AG04450 (cell line): ENCODE measurements at regions of chr6 and their contacts with region 1.

Region 1: DNA sequence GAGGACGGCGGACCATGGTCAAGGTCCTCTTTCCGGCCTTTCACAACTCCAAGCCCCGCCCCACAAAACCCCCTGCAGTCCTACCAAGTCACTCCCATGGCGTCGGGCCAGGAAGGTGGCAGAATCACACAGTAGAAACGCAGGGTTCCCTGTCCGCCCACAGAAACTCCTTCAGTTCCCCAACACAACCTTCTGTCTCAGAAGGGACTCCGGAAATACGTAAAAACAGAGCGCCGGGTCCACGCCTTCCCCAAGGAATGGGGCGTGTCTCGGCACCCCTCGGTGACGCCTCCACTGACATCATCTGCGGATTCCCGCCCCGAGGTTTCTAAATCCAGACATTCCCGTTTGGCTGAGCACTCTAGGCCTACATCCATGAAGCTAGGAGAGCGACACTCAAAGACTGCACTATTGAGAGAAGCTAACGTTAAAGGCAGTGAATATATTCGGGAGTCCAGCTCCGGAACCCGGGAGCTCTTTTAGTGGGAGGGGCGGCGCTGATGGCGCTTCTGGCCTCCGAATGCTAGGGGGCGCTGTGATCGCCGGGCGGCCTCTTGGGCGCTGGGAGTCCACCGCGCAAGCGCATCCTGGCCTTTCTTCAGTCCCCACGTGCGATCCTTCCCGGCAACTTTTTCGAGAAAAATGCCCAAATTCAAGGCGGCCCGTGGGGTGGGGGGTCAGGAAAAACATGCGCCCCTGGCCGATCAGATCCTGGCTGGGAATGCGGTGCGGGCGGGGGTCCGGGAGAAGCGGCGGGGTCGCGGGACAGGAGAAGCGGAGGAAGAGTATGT is at the starts of genes BYSL and MED20:
- DNase-seq: peak; percentile 79
- H3K4me3 ChIP-seq: peak within 1 kb of the TSS; percentile 74
- H3K27ac ChIP-seq: peak within 1 kb of the TSS; percentile 95
- H3K27me3 ChIP-seq: no peaks in the 10 kb centered on the region
- CTCF ChIP-seq: peak; percentile 95
- polyA plus RNA-seq, gene BYSL: 18.1 and 25.1 TPM in 2 replicates
- polyA plus RNA-seq, gene MED20: 45.0 and 48.6 TPM in 2 replicates

Region 2: GRCh38 chr6:41636833-41637193 is 284.3 kb before region 1 on chr6:
- CTCF ChIA-PET with region 1: no interaction called
- POLR2A ChIA-PET with region 1: no interaction called
- DNase-seq: no peak
- H3K4me3 ChIP-seq: no peak overlapping the region
- H3K27ac ChIP-seq: no peak overlapping the region
- H3K27me3 ChIP-seq: peaks cover 82% of the 10 kb centered on the region
- CTCF ChIP-seq: no peak

Region 3: GRCh38 chr6:41757931-41758563 is 163.1 kb before region 1 on chr6:
- CTCF ChIA-PET with region 1: no interaction called
- POLR2A ChIA-PET with region 1: no interaction called
- DNase-seq: no peak
- H3K4me3 ChIP-seq: no peak overlapping the region
- H3K27ac ChIP-seq: no peak overlapping the region
- H3K27me3 ChIP-seq: peaks cover 24% of the 10 kb centered on the region
- CTCF ChIP-seq: no peak

Region 4: GRCh38 chr6:41801380-41801779 is 119.7 kb before region 1 on chr6:
- CTCF ChIA-PET with region 1: interaction called, 15 read pairs
- POLR2A ChIA-PET with region 1: no interaction called
- DNase-seq: no peak
- H3K4me3 ChIP-seq: no peak overlapping the region
- H3K27ac ChIP-seq: no peak overlapping the region
- H3K27me3 ChIP-seq: no peaks in the 10 kb centered on the region
- CTCF ChIP-seq: peak; percentile 81

Region 5: GRCh38 chr6:41895300-41896233 is 25.5 kb before region 1 on chr6 and contains the start of gene USP49:
- CTCF ChIA-PET with region 1: interaction called, 34 read pairs
- POLR2A ChIA-PET with region 1: interaction called, 10 read pairs
- DNase-seq: peak; percentile 56
- H3K4me3 ChIP-seq: peak within 1 kb of the TSS; percentile 80
- H3K27ac ChIP-seq: peak within 1 kb of the TSS; percentile 92
- H3K27me3 ChIP-seq: no peaks in the 10 kb centered on the region
- CTCF ChIP-seq: no peak
- polyA plus RNA-seq, gene USP49: 2.9 and 3.0 TPM in 2 replicates

Region 6: DNA sequence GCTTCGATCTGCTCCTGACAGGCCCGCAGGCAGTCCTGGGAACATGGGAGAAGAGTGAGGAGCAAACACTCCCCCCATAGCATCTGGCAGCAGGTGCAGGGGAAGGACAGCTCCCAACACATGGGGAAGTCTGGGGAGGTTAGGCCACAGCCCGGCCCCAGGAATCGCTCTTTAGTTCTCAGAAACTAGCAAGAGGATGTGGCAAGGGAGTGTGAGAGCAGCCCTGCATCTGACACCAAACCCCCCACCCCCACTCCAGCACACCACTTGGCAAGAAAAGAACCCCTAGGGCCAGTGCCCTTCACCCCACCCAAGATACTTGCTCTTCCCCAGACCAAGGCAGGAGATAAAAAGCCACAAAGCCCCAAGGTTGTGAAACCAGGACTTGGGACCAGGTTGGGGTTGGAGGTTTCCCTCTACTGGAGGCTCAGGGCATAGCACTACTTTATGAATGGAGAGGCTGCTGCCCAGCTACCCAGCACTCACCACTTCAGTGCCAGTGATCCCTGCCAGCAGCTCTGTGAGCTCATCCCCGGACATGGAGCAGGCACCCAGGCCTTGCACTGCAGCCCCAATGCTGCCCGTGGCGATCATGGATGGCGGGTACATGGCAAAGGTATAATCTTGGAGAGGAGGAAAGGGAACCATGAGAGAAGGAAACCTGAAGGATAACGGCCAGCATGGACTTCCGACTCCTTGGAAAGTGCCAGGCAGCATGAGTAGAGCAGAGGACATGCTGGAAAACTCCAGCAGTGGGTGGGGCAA is 15.1 kb after region 1 on chr6:
- CTCF ChIA-PET with region 1: interaction called, 144 read pairs
- POLR2A ChIA-PET with region 1: interaction called, 6 read pairs
- DNase-seq: peak; percentile 65
- H3K4me3 ChIP-seq: no peak overlapping the region
- H3K27ac ChIP-seq: peak overlapping the region; percentile 47
- H3K27me3 ChIP-seq: no peaks in the 10 kb centered on the region
- CTCF ChIP-seq: peak; percentile 94

Region 7: DNA sequence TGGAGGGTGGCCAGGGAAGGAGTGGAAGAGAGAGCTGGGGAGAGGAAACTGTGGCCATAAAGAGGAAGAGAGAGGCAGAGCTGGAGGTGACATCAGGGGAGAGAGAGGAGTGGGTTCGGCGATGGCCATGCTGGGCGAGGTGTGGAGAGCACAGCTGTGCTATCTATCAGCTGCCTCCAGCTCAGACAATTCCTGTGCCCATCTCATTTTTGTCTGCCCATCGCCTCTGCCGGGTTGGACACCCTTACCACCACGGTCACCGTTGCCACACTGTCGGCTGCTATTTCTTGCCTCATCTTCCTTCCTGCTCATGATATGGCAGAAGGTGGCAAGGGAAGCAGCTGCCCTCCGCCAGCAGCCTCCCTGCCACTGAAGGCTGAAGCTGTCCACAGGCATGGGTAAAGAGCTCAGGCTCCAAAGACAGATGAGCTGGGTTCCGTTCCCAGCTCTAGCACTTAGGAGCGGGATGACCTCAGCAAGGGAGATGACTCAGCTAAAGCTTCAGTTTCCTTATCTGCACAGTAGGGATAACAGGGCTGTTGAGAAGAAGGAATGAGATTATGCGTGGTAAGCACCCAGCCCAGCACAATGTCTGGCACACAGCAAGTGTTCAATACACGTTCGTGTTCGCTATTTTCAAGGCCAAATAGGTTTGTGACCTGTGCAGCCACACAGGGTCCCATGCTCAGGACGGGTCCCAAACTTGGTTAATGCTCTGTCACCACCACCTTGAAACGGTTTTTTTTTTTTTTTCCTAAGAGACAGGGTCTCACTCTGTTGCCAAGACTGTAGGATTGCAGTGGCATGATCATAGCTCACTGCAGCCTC is 107.3 kb after region 1 on chr6:
- CTCF ChIA-PET with region 1: interaction called, 13 read pairs
- POLR2A ChIA-PET with region 1: no interaction called
- DNase-seq: no peak
- H3K4me3 ChIP-seq: no peak overlapping the region
- H3K27ac ChIP-seq: no peak overlapping the region
- H3K27me3 ChIP-seq: no peaks in the 10 kb centered on the region
- CTCF ChIP-seq: no peak